Left cardiac atrium (tissue), 4 donors: ENCODE measurements at regions of chr4 and their contacts with region 1.

Region 1: DNA sequence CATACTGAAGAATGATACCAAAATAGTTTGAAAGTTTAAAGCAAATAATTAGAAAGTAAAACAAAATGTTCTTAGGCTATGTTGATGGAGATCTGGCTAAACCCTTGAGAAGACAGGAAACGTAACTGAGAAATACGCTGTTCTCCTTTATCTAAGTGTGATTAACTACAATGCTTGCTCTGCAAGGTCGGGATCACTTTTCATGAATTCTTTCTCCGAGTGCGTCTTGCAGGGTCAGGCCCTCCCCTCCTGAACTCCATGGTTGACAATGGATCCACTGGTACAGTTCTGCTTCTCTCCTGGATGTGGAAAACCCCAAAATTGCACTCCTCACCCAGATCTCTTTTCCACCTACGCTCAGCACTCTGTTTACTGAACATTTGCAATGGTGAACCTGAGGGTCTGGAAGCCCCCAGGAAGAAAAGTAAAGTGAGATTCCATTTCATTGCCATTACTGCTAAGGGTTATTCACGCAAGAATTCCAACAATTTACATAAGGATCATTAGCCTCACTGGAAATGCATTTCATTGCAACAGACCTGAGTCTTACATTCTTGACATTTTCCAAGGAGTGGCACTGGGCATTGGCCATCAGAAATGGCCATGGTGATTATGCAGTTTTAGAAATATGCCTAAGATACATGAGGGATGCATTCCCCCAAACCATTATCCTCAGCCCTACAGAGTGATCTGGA is 24.6 kb upstream of the WWC2 start:
- DNase-seq: no peak
- ATAC-seq: no peak

Region 2: GRCh38 chr4:182680234-182680653 is 394.2 kb before region 1 on chr4:
- intact Hi-C with region 1: no loop called
- DNase-seq: peak; percentile 54
- ATAC-seq: peak; percentile 77 to 91

Region 3: DNA sequence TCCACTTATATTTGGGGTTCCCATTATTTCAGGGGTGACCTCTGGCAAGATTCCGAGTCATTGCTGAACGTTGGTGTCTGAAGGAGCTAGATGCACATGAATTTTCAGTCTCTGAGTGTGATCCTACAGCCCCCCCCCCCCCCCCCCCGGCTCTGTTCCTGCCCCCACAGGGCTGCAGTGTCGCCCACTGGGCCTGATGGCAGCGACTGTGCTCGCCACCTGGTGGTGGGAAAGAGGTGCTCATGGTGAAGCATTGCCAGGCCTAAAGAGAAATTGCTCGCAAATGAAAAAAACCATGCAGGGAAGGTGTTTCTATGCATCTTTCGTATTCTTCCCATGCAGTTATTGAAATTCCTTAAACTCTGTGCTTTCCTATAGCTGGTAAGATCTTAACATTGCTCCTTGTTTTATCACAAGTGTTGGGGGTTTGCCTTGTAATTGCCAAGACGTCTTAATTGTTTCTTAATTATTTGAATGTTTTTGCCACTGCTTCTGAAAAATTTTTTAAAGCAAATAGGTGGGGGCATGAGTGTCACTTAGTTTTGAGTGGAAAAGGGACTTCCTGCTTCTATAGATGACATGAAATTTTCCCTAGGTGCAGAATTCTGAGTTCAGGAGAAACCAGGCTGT is 182.4 kb after region 1 on chr4:
- intact Hi-C with region 1: loop called (anchors 1 to 5 kb)
- DNase-seq: peak; percentile 69
- ATAC-seq: peak; percentile 79 to 82

Region 4: DNA sequence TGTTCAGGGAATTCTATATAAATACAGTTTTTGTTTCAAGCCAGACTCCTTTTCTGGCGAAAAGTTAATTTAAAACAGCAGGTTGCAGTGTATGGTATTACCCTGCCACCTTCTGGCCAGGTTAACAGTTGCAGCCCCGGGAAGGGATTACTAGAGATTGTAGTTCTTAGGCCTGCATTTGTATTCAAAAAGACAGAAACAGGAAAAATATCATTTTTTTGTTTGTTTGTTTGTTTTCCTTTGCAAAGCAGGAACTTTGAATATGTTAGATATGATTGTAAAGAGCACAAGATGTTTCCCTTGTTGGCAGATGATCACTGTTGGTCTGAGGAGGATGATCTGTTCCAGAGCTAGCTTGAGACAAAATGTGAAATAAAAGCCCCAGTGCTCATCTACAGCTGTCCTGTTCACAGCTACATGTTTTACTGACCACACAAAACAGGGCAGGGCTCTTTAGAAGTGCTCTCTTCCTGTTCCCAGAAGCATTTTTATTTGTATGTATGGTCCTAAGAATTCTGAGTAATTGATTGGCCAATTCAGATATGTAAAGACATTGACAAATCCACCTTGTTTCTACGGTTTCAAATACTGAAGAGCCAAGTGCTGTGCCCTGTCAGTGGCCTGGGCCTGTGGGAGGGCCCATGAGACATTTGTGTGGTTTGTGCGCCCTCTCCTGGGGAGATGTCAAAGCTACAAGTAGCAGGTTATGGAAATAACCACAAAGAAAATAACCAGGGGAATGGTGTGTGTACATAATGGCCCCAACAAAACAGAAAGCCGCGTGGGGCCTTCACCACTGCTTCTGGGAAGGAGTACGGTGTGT is 187.7 kb after region 1 on chr4:
- intact Hi-C with region 1: loop called (anchors 1 to 5 kb)
- DNase-seq: peak; percentile 82
- ATAC-seq: peak; percentile 94 to 97

Region 5: GRCh38 chr4:184114431-184114830 is 1040.0 kb after region 1 on chr4:
- intact Hi-C with region 1: no loop called
- DNase-seq: no peak
- ATAC-seq: peak in 1 of 2 donors; percentile 41